AG04449 (cell line): ENCODE measurements at regions of chr11 and their contacts with region 1.

Region 1: DNA sequence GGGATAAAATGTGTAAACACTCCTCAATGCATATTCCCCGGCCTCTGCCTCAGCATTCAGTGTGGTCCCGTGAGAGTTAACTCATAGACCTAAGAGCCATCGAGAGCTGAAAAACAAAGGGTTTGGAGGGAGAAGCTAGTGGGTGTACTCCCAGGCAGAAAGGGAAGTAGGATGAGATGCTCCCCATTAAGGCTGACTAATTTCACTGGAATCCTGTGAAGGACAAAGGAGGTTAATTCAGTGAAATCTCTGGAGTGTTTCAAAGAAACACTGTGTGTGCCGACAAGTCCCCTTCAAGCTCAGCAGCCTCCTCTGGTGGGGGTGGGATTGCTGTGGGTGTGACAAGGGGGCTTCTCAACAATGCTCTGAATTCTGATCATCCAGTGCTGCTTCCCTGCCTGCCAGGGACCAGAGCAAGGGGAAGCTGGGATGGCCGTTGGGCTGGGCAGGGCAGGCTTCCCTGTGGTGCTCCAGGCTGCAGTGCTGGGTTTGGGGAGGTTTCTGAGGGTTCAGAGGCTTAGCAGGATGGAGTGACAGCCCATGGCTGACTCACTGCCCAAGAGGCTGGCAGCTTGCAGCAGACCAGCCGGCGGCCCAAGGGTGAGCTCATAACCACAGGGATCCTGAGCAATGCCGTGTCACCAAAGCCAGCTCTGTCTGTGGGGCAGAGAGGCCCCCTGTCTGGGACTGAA is 61.4 kb upstream of the BMAL1 start:
- DNase-seq: peak; percentile 85
- H3K4me3 ChIP-seq: peak overlapping the region; percentile 26
- CTCF ChIP-seq: no peak

Region 2: DNA sequence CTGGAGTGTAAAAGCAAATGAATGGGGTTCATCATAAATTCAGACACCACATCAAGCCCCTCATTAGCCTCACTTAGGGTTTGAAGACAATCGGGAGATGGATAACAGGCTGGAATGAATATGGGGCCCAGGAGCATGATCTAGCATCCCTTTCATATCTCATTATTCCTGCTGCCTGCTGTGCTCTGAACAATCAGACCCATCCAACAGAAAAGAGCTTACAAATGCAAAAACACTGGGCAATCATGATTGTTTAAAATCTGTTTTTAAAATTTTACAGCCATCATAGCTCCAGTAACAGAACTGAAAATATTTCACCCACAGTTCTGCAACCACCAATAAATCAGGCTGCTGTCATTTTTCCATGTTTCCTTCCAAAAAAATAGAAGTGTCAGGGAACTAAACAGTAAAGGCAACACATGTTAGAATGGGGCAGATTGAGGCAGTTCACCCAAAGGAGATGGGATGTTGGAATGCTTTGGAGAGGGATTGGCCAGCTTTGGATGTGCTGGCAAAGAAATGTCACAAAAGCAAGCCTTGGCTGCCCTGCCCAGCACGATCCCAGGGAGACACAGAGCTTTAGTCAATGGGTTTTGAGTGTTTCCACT is 13.7 kb after region 1 on chr11:
- CTCF ChIA-PET with region 1: interaction called, 191 read pairs
- POLR2A ChIA-PET with region 1: interaction called, 8 read pairs
- DNase-seq: no peak
- H3K4me3 ChIP-seq: no peak overlapping the region
- CTCF ChIP-seq: no peak